ENCODE measurements at regions of chr14 and their contacts with region 1.

Region 1: GRCh38 chr14:35808076-35808652 is 931 bp downstream of the RALGAPA1 start:
- DNase-seq: peak; percentile 65
- H3K4me3 ChIP-seq: peak overlapping the region; percentile 54 to 91 (median 74)
- H3K27ac ChIP-seq: peak overlapping the region; percentile 18
- H3K4me1 ChIP-seq: peaks cover 8% of the 10 kb centered on the region
- H3K27me3 ChIP-seq: no peaks in the 10 kb centered on the region
- CTCF ChIP-seq: no peak
- POLR2A ChIP-seq: no peak

Region 2: GRCh38 chr14:35533357-35534207 is 274.6 kb before region 1 on chr14 and contains the start of gene INSM2:
- CTCF ChIA-PET with region 1: no interaction called
- POLR2A ChIA-PET with region 1: no interaction called
- dilution Hi-C with region 1: no loop called
- intact Hi-C with region 1: loop called (anchors 5 kb)
- DNase-seq: peak; percentile 60
- H3K4me3 ChIP-seq: peak within 1 kb of the TSS; percentile 48 to 80 (median 63)
- H3K27ac ChIP-seq: no peak within 1 kb of the TSS
- H3K4me1 ChIP-seq: peaks cover 17% of the 10 kb centered on the region
- H3K27me3 ChIP-seq: peaks cover 41 to 61% of the 10 kb centered on the region in 2 experiments
- CTCF ChIP-seq: no peak
- POLR2A ChIP-seq: no peak
- total RNA-seq, gene INSM2: not detected in 2 replicates

Region 3: DNA sequence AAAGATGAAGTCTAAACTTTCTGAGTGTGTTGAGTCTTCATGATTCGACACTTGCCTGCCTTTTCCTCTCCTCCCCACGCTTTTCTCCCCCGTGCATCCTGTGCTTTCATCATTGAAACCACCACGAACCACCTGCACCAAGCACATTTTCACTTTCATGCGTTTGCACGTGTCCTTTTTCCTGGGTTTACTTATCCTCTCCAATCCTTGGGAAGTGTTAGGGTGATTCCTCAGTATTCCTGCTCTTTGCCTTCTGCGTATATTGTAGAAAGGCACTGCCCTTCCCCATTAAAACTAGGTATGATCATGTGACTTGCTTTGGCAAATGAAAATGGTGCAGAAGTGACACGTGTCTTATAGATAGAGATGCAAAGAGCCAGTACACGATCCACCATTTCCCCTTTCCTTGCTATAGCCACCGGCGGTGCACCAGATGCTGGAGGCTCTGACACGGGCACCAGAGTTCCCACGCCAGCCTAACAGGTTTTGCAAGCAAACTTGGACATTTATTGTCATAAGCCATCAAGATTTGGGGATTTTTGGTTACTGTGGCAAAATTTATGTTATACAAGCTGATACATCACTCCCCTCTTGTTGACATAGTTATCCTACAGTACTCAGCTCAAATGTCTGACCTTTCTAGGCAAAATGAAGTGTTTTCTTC is 124.6 kb after region 1 on chr14:
- CTCF ChIA-PET with region 1: no interaction called
- POLR2A ChIA-PET with region 1: no interaction called
- dilution Hi-C with region 1: no loop called
- intact Hi-C with region 1: no loop called
- DNase-seq: no peak
- H3K4me3 ChIP-seq: no peak overlapping the region
- H3K27ac ChIP-seq: no peak overlapping the region
- H3K4me1 ChIP-seq: no peaks in the 10 kb centered on the region
- H3K27me3 ChIP-seq: peaks cover 2 to 3% of the 10 kb centered on the region in 2 experiments
- CTCF ChIP-seq: no peak
- POLR2A ChIP-seq: no peak